Lower leg skin (tissue), 4 donors: ENCODE measurements at regions of chr2 and their contacts with region 1.

Region 1: DNA sequence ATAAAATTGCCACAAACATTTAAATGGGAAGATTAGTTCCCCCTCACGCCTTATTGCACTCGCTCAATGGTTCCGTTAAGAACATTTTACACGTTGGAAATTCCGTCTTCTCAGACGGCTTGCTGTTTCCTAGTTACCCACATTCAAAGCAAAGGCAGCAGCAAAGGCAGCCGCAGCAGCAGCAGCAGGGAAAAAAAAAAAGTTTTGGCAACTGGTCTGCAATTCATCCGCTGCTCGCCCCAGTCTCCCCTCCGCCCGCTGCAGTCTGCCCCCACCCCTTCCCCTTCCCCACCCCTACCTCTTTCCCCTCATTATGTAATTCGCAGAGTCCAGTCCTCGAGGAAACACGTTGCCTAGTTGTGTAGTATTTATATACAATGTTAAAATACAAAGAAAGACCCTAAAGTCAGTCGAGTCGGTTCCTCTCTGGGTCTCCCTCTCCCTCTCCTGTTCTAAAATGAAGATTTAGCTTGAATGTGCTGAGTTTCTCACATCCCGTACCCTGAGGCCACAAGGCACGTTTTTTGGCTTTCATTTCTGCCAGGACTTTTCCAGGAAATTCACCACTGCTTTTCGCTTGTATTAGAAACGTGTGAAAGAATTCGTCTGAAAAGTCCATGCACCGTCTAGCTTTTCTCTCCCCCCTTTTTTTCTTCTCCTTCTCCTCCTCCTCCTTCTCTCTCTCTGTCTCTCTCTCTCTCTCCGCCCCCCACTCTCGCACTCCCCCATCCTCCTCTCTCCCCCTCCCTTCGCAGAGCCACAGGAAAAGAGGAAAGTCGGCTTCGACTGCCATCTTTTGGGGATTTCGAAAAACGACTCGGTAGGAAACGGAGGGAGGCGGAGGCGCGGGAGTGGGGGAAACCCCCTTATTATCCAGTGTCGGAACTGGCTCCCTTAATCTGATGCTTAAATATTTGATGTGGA is 140.0 kb downstream of the MEIS1 start:
- DNase-seq: peak in 1 of 2 donors; percentile 87
- H3K4me3 ChIP-seq: peak overlapping the region; percentile 41
- CTCF ChIP-seq: peak in 1 of 3 donors; percentile 44
- POLR2A ChIP-seq: no peak

Region 2: GRCh38 chr2:66434679-66435548 is 140.0 kb before region 1 on chr2 and contains the start of gene MEIS1:
- intact Hi-C with region 1: loop called (anchors 5 kb)
- DNase-seq: peak; percentile 94 to 97
- H3K4me3 ChIP-seq: peak within 1 kb of the TSS; percentile 30
- CTCF ChIP-seq: peak in 1 of 3 donors; percentile 33
- POLR2A ChIP-seq: peak in 1 of 2 donors; percentile 42
- total RNA-seq, gene MEIS1: 9.2 to 22.6 (median 18.8) TPM